CD8-positive, alpha-beta T cell (primary cell): ENCODE measurements at regions of chr7 and their contacts with region 1.

Region 1: GRCh38 chr7:4681886-4682620 is at the start of gene FOXK1:
- DNase-seq: peak; percentile 56 to 89 (median 77)
- ATAC-seq: peak; percentile 81
- H3K4me3 ChIP-seq: peak within 1 kb of the TSS; percentile 70 to 78
- H3K4me3 Mint-ChIP-seq: peak within 1 kb of the TSS; percentile 97
- H3K27ac ChIP-seq: peak within 1 kb of the TSS; percentile 57 to 86
- H3K27ac Mint-ChIP-seq: peak within 1 kb of the TSS; percentile 100
- H3K4me1 ChIP-seq: peaks cover 25% of the 10 kb centered on the region
- H3K4me1 Mint-ChIP-seq: peaks cover 33% of the 10 kb centered on the region
- H3K27me3 ChIP-seq: no peaks in the 10 kb centered on the region
- H3K27me3 Mint-ChIP-seq: peaks cover 3% of the 10 kb centered on the region
- CTCF ChIP-seq: no peak
- total RNA-seq, gene FOXK1: 65.8 to 69.8 TPM

Region 2: GRCh38 chr7:4610768-4611467 is 71.1 kb before region 1 on chr7:
- CTCF ChIA-PET with region 1: interaction called, 9 read pairs
- POLR2A ChIA-PET with region 1: no interaction called
- intact Hi-C with region 1: loop called (anchors 1 kb)
- DNase-seq: peak; percentile 12 to 80 (median 59)
- ATAC-seq: peak; percentile 91
- H3K4me3 ChIP-seq: no peak overlapping the region
- H3K4me3 Mint-ChIP-seq: no peak overlapping the region
- H3K27ac ChIP-seq: no peak overlapping the region
- H3K27ac Mint-ChIP-seq: no peak overlapping the region
- H3K4me1 ChIP-seq: no peaks in the 10 kb centered on the region
- H3K4me1 Mint-ChIP-seq: peaks cover 8% of the 10 kb centered on the region
- H3K27me3 ChIP-seq: no peaks in the 10 kb centered on the region
- H3K27me3 Mint-ChIP-seq: peaks cover 6% of the 10 kb centered on the region
- CTCF ChIP-seq: peak; percentile 70

Region 3: GRCh38 chr7:4725014-4725849 is 43.2 kb after region 1 on chr7:
- CTCF ChIA-PET with region 1: interaction called, 4 read pairs
- POLR2A ChIA-PET with region 1: interaction called, 3 read pairs
- intact Hi-C with region 1: loop called (anchors 2 kb)
- DNase-seq: peak in 8 of 9 experiments; percentile 30 to 84 (median 66)
- ATAC-seq: peak; percentile 81
- H3K4me3 ChIP-seq: peak overlapping the region; percentile 70 to 80
- H3K4me3 Mint-ChIP-seq: peak overlapping the region; percentile 95
- H3K27ac ChIP-seq: peak overlapping the region; percentile 91 to 94
- H3K27ac Mint-ChIP-seq: peak overlapping the region; percentile 99
- H3K4me1 ChIP-seq: peaks cover 54% of the 10 kb centered on the region
- H3K4me1 Mint-ChIP-seq: peaks cover 55% of the 10 kb centered on the region
- H3K27me3 ChIP-seq: no peaks in the 10 kb centered on the region
- H3K27me3 Mint-ChIP-seq: no peaks in the 10 kb centered on the region
- CTCF ChIP-seq: no peak

Region 4: GRCh38 chr7:4753711-4754432 is 71.8 kb after region 1 on chr7:
- CTCF ChIA-PET with region 1: interaction called, 4 read pairs
- POLR2A ChIA-PET with region 1: no interaction called
- intact Hi-C with region 1: loop called in 1 of 2 experiments (anchors 1 kb)
- DNase-seq: peak; percentile 69 to 95 (median 86)
- ATAC-seq: peak; percentile 98
- H3K4me3 ChIP-seq: no peak overlapping the region
- H3K4me3 Mint-ChIP-seq: no peak overlapping the region
- H3K27ac ChIP-seq: no peak overlapping the region
- H3K27ac Mint-ChIP-seq: no peak overlapping the region
- H3K4me1 ChIP-seq: peaks cover 19% of the 10 kb centered on the region
- H3K4me1 Mint-ChIP-seq: peaks cover 17% of the 10 kb centered on the region
- H3K27me3 ChIP-seq: no peaks in the 10 kb centered on the region
- H3K27me3 Mint-ChIP-seq: no peaks in the 10 kb centered on the region
- CTCF ChIP-seq: peak; percentile 83

Region 5: DNA sequence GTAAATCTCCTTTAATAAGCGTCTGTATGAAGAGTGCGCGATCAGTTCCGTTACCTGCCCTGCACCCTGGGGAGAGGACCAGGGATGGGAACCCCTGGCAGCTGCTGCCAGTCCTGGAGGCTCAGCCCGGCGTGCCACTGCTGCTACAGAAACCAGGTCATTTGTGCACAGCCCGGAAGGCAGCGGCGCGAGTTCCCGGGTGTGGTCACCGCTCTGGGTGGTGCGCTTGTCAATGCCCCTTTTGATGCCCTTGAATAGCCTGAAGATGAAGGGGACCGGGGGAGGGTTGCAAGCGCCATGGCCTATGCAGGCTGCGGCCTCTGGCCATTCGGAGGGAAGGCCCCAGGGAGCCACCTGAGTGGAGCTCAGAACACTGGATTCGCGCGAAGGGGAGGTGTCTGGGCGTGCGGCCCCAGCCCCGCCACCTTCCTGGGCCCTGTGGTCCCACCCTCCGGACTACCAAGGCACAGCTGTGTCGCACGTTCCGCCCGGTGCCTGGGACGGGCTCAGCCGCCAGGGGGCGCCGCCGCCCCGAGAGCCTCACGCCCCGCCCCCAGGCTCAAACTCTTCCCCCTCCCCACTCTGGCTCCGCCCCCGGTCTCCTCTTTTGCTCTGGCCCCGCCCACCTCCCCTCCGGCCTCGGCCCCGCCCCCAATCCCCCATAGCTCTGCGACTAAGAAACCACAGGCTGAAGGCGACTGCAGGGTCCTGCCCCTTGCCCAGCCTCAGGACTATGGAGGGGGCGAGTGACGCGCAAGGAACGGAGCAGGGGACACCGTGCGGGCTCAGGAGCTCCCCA is 109.9 kb after region 1 on chr7:
- CTCF ChIA-PET with region 1: no interaction called
- POLR2A ChIA-PET with region 1: no interaction called
- intact Hi-C with region 1: loop called in 1 of 2 experiments (anchors 5 kb)
- DNase-seq: peak; percentile 68 to 88 (median 81)
- ATAC-seq: peak; percentile 89
- H3K4me3 ChIP-seq: peak overlapping the region; percentile 48 to 59
- H3K4me3 Mint-ChIP-seq: no peak overlapping the region
- H3K27ac ChIP-seq: no peak overlapping the region
- H3K27ac Mint-ChIP-seq: no peak overlapping the region
- H3K4me1 ChIP-seq: peaks cover 5% of the 10 kb centered on the region
- H3K4me1 Mint-ChIP-seq: peaks cover 3% of the 10 kb centered on the region
- H3K27me3 ChIP-seq: no peaks in the 10 kb centered on the region
- H3K27me3 Mint-ChIP-seq: no peaks in the 10 kb centered on the region
- CTCF ChIP-seq: peak; percentile 47